ENCODE measurements at regions of chr1 and their contacts with region 1.

Region 1: DNA sequence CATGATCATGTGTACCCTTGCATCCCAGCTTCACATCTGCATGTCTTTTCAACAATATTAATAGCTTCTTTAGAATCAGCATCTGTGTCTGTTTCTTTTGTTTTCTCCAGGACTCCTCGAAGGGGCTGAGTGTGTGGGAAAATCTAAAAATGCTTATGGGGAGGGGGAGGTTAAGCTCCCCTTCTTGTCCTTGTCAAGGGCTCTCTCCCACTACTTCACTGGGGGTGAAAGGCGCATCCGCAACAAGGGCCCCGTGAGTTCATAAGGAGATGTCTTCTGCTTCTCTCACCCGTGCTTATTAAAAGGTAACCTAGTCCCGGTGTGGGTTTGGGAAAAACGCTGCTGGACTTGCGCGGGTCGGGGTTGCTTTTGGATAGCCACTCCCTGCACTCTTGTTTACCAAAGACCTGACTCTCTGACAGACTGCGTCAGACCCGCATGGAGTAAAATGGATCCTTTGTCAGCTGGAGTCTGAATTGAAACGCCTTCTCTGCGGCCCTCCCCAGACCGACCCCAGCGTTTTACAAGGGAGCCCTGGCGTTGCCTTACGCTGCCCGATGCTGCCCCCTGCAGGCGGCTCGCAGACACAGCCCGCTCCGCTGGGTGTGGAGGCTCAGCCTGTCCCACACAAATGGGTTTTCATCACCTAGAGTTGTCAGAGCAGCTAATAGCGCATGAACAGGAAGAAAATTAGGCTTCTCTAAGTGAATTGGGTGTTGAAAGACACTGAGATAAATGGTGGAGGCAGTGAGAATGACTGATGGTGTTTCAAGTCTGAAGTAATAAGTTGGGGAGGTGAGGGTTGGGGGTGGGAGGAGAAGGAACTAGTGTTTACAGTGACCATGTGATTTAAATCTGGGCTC is 53.8 kb downstream of the IER5 start:
- DNase-seq: peak; percentile 80 to 85 (median 82)
- H3K4me3 ChIP-seq: peak overlapping the region in 1 of 3 experiments; percentile 45
- H3K4me3 Mint-ChIP-seq: peak overlapping the region; percentile 64 to 65
- H3K27ac ChIP-seq: peak overlapping the region in 1 of 2 donors; percentile 54
- H3K27ac Mint-ChIP-seq: peak overlapping the region; percentile 51 to 91 (median 82)
- H3K4me1 ChIP-seq: peaks cover 39 to 48% of the 10 kb centered on the region in 2 donors
- H3K4me1 Mint-ChIP-seq: peaks cover 59% of the 10 kb centered on the region
- H3K27me3 ChIP-seq: no peaks in the 10 kb centered on the region
- H3K27me3 Mint-ChIP-seq: peaks cover 1 to 6% (median 5%) of the 10 kb centered on the region in 3 donors
- CTCF ChIP-seq: peak; percentile 88

Region 2: DNA sequence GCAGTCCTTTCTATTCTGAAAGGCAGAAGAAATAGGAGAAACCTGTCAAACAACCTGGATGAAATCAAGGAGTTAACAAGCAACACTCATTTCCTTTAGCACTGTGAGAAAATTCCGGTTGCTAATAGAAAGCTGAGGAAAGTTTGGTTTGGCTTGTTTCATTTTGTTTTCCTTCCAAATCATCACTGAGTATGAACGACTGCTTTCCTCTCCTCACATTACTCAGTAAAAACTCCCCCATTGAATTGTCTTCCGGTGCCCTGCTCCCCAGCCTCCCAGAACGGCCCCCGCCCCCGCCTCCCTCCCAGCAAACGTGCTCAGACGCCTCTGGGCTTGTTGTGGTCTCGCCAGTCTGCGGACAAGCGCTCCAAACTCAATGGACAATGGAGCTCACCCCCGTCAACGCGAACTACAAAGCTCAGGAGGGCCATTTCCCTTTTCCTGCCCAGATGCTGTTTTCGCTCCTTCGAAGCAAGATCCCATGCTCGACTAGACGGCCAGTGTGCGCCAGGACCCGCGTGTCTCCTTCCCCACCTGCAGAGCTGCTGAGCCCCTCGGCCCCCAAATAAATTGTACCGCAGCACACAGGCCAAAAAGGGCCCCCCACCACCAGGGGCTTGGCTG is 120.4 kb before region 1 on chr1:
- intact Hi-C with region 1: loop called in 1 of 2 experiments (anchors 5 kb)
- DNase-seq: peak in 2 of 3 donors; percentile 59 to 80
- H3K4me3 ChIP-seq: peak overlapping the region; percentile 57 to 98 (median 93)
- H3K4me3 Mint-ChIP-seq: peak overlapping the region; percentile 97
- H3K27ac ChIP-seq: peak overlapping the region; percentile 83 to 96
- H3K27ac Mint-ChIP-seq: peak overlapping the region; percentile 94 to 98 (median 97)
- H3K4me1 ChIP-seq: peaks cover 30 to 35% of the 10 kb centered on the region in 2 donors
- H3K4me1 Mint-ChIP-seq: peaks cover 30% of the 10 kb centered on the region
- H3K27me3 ChIP-seq: no peaks in the 10 kb centered on the region
- H3K27me3 Mint-ChIP-seq: peaks cover 2 to 10% (median 3%) of the 10 kb centered on the region in 3 donors
- CTCF ChIP-seq: no peak

Region 3: GRCh38 chr1:181033799-181034451 is 108.4 kb before region 1 on chr1 and contains the start of gene MR1:
- intact Hi-C with region 1: loop called in 1 of 2 experiments (anchors 2 kb)
- DNase-seq: peak; percentile 86 to 92 (median 91)
- H3K4me3 ChIP-seq: peak within 1 kb of the TSS; percentile 52 to 100 (median 83)
- H3K4me3 Mint-ChIP-seq: peak within 1 kb of the TSS; percentile 86 to 96
- H3K27ac ChIP-seq: peak within 1 kb of the TSS; percentile 82 to 100
- H3K27ac Mint-ChIP-seq: peak within 1 kb of the TSS; percentile 97 to 100 (median 99)
- H3K4me1 ChIP-seq: peaks cover 46 to 58% of the 10 kb centered on the region in 2 donors
- H3K4me1 Mint-ChIP-seq: peaks cover 54% of the 10 kb centered on the region
- H3K27me3 ChIP-seq: no peaks in the 10 kb centered on the region
- H3K27me3 Mint-ChIP-seq: no peaks in the 10 kb centered on the region
- CTCF ChIP-seq: no peak
- polyA plus RNA-seq, gene MR1: 17.7 to 46.9 (median 40.9) TPM

Region 4: GRCh38 chr1:181044449-181044966 is 97.8 kb before region 1 on chr1:
- intact Hi-C with region 1: loop called (anchors 2 to 5 kb)
- DNase-seq: peak; percentile 93 to 96 (median 95)
- H3K4me3 ChIP-seq: peak overlapping the region in 1 of 3 experiments; percentile 3
- H3K4me3 Mint-ChIP-seq: peak overlapping the region; percentile 61 to 72
- H3K27ac ChIP-seq: peak overlapping the region; percentile 80 to 96
- H3K27ac Mint-ChIP-seq: peak overlapping the region; percentile 95 to 98 (median 96)
- H3K4me1 ChIP-seq: peaks cover 55 to 63% of the 10 kb centered on the region in 2 donors
- H3K4me1 Mint-ChIP-seq: peaks cover 53% of the 10 kb centered on the region
- H3K27me3 ChIP-seq: no peaks in the 10 kb centered on the region
- H3K27me3 Mint-ChIP-seq: peaks cover 0 to 1% (median 0%) of the 10 kb centered on the region in 3 donors
- CTCF ChIP-seq: no peak

Region 5: DNA sequence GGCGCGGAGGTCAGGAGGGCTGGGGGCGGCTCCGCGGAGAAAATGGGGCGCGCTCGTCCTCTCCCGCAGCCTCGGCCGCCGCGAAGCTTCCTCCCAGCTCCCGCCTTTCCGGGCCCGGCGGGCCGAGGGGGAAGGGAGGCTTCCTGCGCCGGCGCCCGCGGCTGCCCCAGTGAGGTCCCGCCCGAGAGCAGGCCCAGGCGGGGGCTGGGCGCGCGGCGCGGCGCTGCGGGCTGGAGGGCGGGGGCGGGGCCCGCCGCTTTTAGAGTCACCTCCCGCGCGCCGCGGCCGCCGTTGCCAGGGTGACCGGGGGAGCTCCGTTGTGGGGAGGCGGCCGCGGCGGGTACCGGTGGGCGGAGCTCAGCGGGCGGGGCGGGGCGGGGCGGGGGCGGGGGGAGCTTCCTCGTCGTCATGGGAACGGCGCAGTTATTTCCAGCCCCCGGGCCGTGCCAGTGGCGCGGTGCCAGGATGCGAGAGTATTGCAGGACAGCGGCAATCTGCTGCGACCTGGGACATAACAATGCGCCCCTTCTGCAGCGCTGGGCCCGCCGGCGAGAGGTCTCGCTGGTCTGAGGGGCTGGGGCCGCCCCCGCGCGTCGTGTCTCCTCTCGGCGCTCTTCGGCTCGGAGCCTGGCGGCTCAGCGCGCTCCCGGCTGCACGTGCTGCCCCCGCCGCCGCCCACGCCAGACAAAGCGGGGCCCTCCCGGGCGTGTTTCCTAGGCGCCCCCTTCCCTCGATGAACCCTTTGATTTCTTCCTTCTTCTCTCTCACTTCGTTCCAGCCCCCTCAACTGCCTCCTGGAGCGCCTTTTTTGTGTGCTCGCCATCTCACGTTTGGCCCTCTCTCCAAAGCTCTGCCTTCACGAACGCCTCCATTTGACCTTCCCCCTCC is 36.9 kb before region 1 on chr1:
- intact Hi-C with region 1: loop called in 1 of 2 experiments (anchors 5 kb)
- DNase-seq: peak; percentile 88 to 93 (median 90)
- H3K4me3 ChIP-seq: peak overlapping the region; percentile 69 to 82 (median 70)
- H3K4me3 Mint-ChIP-seq: peak overlapping the region; percentile 84 to 92
- H3K27ac ChIP-seq: peak overlapping the region; percentile 62 to 87
- H3K27ac Mint-ChIP-seq: peak overlapping the region; percentile 80 to 90 (median 89)
- H3K4me1 ChIP-seq: peaks cover 46 to 60% of the 10 kb centered on the region in 2 donors
- H3K4me1 Mint-ChIP-seq: peaks cover 61% of the 10 kb centered on the region
- H3K27me3 ChIP-seq: peaks cover 0 to 11% of the 10 kb centered on the region in 2 donors
- H3K27me3 Mint-ChIP-seq: peaks cover 22 to 31% (median 23%) of the 10 kb centered on the region in 3 donors
- CTCF ChIP-seq: no peak

Region 6: DNA sequence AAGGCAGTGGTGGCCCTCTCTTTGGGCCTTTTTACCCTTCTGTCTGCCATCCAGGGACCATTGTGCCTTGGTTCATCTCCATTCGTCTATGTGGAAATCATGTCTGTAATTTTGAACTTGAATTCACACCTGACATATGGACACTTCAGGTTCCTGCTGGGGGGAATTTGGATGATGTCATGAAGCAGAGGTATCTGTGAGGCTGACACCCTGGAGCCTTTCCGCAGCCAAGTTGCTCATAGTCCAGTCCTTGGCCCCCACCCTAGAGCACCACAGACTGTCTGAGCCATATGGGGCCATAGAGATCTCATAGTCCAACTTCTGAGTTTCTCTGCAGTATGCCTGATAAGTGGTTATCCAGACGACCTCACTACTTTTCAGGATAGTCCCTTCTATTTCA is 193.3 kb after region 1 on chr1:
- intact Hi-C with region 1: no loop called
- DNase-seq: no peak
- H3K4me3 ChIP-seq: no peak overlapping the region
- H3K4me3 Mint-ChIP-seq: no peak overlapping the region
- H3K27ac ChIP-seq: no peak overlapping the region
- H3K27ac Mint-ChIP-seq: no peak overlapping the region
- H3K4me1 ChIP-seq: no peaks in the 10 kb centered on the region
- H3K4me1 Mint-ChIP-seq: no peaks in the 10 kb centered on the region
- H3K27me3 ChIP-seq: no peaks in the 10 kb centered on the region
- H3K27me3 Mint-ChIP-seq: peaks cover 0 to 2% (median 2%) of the 10 kb centered on the region in 3 donors
- CTCF ChIP-seq: no peak

Measured in CD14-positive monocyte (primary cell).